Mammary epithelial cell (primary cell): ENCODE measurements at regions of chr11 and their contacts with region 1.

Region 1: DNA sequence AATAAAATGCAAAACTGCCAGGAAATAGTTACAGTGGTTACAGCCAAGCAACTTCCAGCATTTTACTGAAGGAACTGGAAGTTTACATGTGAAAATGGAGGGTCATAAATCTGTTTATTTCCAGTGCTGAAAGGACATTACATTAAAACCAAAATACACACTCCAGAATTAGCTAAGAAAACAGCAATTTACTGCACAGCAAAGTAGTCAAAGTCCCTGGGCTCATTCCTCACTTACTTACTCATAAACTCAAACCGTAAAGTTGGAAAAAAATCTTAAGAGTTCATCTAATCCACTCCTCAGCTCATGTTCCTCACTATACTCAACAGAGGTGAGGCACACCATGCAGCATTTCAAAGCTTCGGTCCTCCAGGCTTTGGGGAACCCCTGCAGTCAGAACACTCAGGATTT is 17.4 kb downstream of the CTSC start:
- DNase-seq: peak; percentile 32
- H3K4me3 ChIP-seq: no peak overlapping the region
- H3K27ac ChIP-seq: no peak overlapping the region
- H3K4me1 ChIP-seq: peaks cover 29% of the 10 kb centered on the region
- H3K27me3 ChIP-seq: no peaks in the 10 kb centered on the region
- CTCF ChIP-seq: no peak

Region 2: DNA sequence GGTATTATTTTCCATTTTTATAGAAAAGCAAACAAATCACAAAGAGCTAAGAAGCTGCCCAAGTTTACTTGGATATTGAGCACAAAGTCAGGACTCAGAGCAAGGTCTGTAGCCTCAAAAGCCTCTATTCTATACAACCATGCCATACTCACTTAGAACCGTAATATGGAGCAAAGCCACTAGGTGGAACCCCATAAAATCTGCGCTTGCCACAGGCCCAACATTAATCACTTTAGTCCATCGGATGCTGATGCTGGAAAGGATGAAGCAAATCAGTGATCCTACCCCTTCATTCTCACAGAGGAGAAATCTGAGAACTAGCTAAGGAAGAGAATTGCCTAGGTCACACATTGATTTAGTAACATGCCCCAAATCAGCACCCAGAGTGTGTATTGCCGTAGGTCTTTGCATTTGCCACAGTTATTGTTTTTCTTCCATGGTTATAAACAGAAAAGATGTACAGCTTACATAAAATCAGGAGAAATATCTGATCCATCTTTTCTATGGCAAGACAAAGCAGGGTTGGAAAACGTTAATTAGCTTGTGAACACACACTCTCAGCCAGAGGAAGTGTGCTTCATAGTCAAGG is 88.2 kb before region 1 on chr11:
- CTCF ChIA-PET with region 1: interaction called, 10 read pairs
- dilution Hi-C with region 1: no loop called
- in situ Hi-C with region 1: no loop called
- intact Hi-C with region 1: no loop called
- DNase-seq: peak; percentile 34
- H3K4me3 ChIP-seq: no peak overlapping the region
- H3K27ac ChIP-seq: no peak overlapping the region
- H3K4me1 ChIP-seq: no peaks in the 10 kb centered on the region
- H3K27me3 ChIP-seq: no peaks in the 10 kb centered on the region
- CTCF ChIP-seq: peak; percentile 72 to 75

Region 3: GRCh38 chr11:88484873-88485621 is 164.9 kb after region 1 on chr11:
- CTCF ChIA-PET with region 1: no interaction called
- dilution Hi-C with region 1: no loop called
- in situ Hi-C with region 1: no loop called
- intact Hi-C with region 1: no loop called
- DNase-seq: peak; percentile 85
- H3K4me3 ChIP-seq: no peak overlapping the region
- H3K27ac ChIP-seq: no peak overlapping the region
- H3K4me1 ChIP-seq: peaks cover 29% of the 10 kb centered on the region
- H3K27me3 ChIP-seq: no peaks in the 10 kb centered on the region
- CTCF ChIP-seq: peak; percentile 68 to 82